ENCODE measurements at regions of chr12 and their contacts with region 1.

Region 1: GRCh38 chr12:57459055-57459749 is 383 bp upstream of the GLI1 start:
- DNase-seq: peak; percentile 93
- H3K4me3 ChIP-seq: peak overlapping the region; percentile 37 to 63 (median 55)
- H3K27ac ChIP-seq: peak overlapping the region; percentile 25
- H3K4me1 ChIP-seq: peaks cover 14% of the 10 kb centered on the region
- H3K27me3 ChIP-seq: peaks cover 5 to 10% of the 10 kb centered on the region in 2 experiments
- CTCF ChIP-seq: peak; percentile 96 to 97
- POLR2A ChIP-seq: peak; percentile 63

Region 2: GRCh38 chr12:57319678-57320469 is 139.3 kb before region 1 on chr12:
- CTCF ChIA-PET with region 1: interaction called, 10 read pairs
- POLR2A ChIA-PET with region 1: no interaction called
- dilution Hi-C with region 1: no loop called
- intact Hi-C with region 1: no loop called
- DNase-seq: peak; percentile 28
- H3K4me3 ChIP-seq: no peak overlapping the region
- H3K27ac ChIP-seq: no peak overlapping the region
- H3K4me1 ChIP-seq: no peaks in the 10 kb centered on the region
- H3K27me3 ChIP-seq: no peaks in the 10 kb centered on the region
- CTCF ChIP-seq: no peak
- POLR2A ChIP-seq: no peak

Region 3: GRCh38 chr12:57469296-57470164 is 10.3 kb after region 1 on chr12:
- CTCF ChIA-PET with region 1: interaction called, 18 read pairs
- POLR2A ChIA-PET with region 1: no interaction called
- dilution Hi-C with region 1: no loop called
- intact Hi-C with region 1: no loop called
- DNase-seq: no peak
- H3K4me3 ChIP-seq: no peak overlapping the region
- H3K27ac ChIP-seq: no peak overlapping the region
- H3K4me1 ChIP-seq: no peaks in the 10 kb centered on the region
- H3K27me3 ChIP-seq: peaks cover 33 to 39% of the 10 kb centered on the region in 2 experiments
- CTCF ChIP-seq: no peak
- POLR2A ChIP-seq: no peak

Region 4: GRCh38 chr12:57487597-57488401 is 28.6 kb after region 1 on chr12 and contains the start of gene MARS1:
- CTCF ChIA-PET with region 1: no interaction called
- POLR2A ChIA-PET with region 1: no interaction called
- dilution Hi-C with region 1: no loop called
- intact Hi-C with region 1: loop called (anchors 1 kb)
- DNase-seq: peak; percentile 95
- H3K4me3 ChIP-seq: peak within 1 kb of the TSS; percentile 60 to 99 (median 94)
- H3K27ac ChIP-seq: peak within 1 kb of the TSS; percentile 48
- H3K4me1 ChIP-seq: peaks cover 9% of the 10 kb centered on the region
- H3K27me3 ChIP-seq: no peaks in the 10 kb centered on the region
- CTCF ChIP-seq: no peak
- POLR2A ChIP-seq: peak; percentile 86
- total RNA-seq, gene MARS1: 212 and 216 TPM in 2 replicates